ENCODE measurements at regions of chr13 and their contacts with region 1.

Region 1: GRCh38 chr13:111066544-111066943 is 48.6 kb upstream of the ARHGEF7 start:
- DNase-seq: no peak
- H3K4me3 ChIP-seq: no peak overlapping the region
- H3K27ac ChIP-seq: no peak overlapping the region
- H3K4me1 ChIP-seq: peaks cover 7% of the 10 kb centered on the region
- H3K27me3 ChIP-seq: peaks cover 13 to 23% of the 10 kb centered on the region in 2 experiments
- CTCF ChIP-seq: no peak
- POLR2A ChIP-seq: no peak

Region 2: DNA sequence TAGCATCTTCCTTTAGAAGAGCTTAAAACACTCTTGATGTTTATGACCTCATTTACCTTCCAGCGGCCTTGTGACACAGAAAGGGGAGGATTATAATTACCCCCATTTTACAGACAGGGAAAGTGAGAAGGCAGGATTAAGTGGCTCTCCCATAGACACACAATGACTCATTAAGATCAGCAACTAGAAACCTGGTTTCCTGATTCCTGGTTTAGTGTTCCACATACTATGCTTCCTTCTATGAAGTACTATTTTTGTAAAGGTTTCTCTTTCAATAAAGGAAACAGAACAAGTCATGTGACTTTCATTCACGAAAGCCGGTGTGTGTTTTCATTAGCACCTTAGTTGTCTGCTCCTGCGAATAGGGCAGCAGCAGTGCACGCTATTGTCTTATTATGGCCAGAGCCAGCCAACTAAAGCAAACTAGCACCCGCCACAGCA is 1288.4 kb before region 1 on chr13:
- CTCF ChIA-PET with region 1: no interaction called
- POLR2A ChIA-PET with region 1: no interaction called
- dilution Hi-C with region 1: no loop called
- intact Hi-C with region 1: no loop called
- DNase-seq: peak; percentile 35
- H3K4me3 ChIP-seq: no peak overlapping the region
- H3K27ac ChIP-seq: no peak overlapping the region
- H3K4me1 ChIP-seq: peaks cover 6% of the 10 kb centered on the region
- H3K27me3 ChIP-seq: no peaks in the 10 kb centered on the region
- CTCF ChIP-seq: no peak
- POLR2A ChIP-seq: no peak

Region 3: GRCh38 chr13:111049802-111050538 is 16.6 kb before region 1 on chr13:
- CTCF ChIA-PET with region 1: interaction called, 12 read pairs
- POLR2A ChIA-PET with region 1: no interaction called
- dilution Hi-C with region 1: no loop called
- intact Hi-C with region 1: no loop called
- DNase-seq: peak; percentile 24
- H3K4me3 ChIP-seq: no peak overlapping the region
- H3K27ac ChIP-seq: no peak overlapping the region
- H3K4me1 ChIP-seq: no peaks in the 10 kb centered on the region
- H3K27me3 ChIP-seq: peaks cover 0 to 1% of the 10 kb centered on the region in 2 experiments
- CTCF ChIP-seq: peak in 1 of 2 donors; percentile 46
- POLR2A ChIP-seq: no peak

Region 4: DNA sequence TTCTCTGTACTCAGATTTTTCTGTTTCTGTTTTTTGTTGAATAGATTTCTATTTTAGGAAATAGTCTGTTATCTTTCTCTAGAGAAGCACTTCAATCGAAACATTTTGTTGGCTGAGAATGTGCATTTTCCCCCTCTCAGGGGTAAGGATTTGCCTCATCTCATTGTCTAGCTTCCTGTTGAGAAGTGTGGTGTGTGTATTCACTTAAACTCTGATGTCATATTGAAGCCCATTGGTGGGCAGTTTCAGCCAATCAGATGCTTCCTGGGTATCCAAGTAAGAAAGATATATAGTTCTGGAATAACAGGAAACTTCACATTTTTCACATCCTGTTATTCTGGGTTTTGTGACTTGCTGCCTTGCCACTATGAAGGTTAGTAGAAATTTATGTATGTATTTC is 136.2 kb after region 1 on chr13:
- CTCF ChIA-PET with region 1: interaction called, 11 read pairs
- POLR2A ChIA-PET with region 1: no interaction called
- dilution Hi-C with region 1: no loop called
- intact Hi-C with region 1: no loop called
- DNase-seq: peak; percentile 99
- H3K4me3 ChIP-seq: peak overlapping the region; percentile 65 to 97 (median 82)
- H3K27ac ChIP-seq: peak overlapping the region; percentile 100
- H3K4me1 ChIP-seq: peaks cover 28% of the 10 kb centered on the region
- H3K27me3 ChIP-seq: no peaks in the 10 kb centered on the region
- CTCF ChIP-seq: no peak
- POLR2A ChIP-seq: peak; percentile 80

Region 5: DNA sequence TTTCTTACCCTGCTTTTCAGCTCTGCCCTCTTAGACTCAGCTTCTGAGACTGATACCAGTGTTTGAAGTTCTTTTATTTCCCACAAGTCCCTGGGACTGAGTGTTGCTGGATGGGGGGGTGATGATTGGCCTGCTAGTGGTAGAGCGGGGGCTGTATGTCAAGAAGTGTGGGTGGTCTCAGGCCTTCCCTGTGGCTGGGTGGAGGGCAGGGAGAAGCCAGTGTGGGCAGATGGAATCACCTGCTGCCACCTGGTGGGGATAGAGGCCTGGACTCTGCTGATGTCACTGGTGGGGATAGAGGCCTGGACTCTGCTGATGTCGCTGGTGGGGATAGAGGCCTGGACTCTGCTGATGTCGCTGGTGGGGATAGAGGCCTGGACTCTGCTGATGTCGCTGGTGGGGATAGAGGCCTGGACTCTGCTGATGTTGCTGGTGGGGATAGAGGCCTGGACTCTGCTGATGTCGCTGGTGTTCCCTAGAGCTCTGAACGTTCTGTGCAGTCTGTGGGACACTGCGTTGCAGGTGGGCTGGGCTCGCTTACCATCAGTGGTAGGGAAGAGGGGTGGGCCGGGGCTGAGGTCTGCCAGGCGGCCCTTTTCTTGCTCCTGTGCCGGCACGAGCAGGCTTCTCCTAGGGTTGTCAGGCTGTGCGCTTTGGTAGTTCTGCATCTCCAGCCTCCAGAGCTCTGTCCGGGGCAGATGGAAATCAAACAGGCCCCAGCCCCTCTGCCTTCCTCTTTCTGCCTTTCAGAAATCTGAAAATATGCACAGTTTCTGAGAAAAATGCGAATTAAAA is 149.8 kb after region 1 on chr13:
- CTCF ChIA-PET with region 1: interaction called, 43 read pairs
- POLR2A ChIA-PET with region 1: no interaction called
- dilution Hi-C with region 1: no loop called
- intact Hi-C with region 1: no loop called
- DNase-seq: no peak
- H3K4me3 ChIP-seq: no peak overlapping the region
- H3K27ac ChIP-seq: no peak overlapping the region
- H3K4me1 ChIP-seq: peaks cover 11% of the 10 kb centered on the region
- H3K27me3 ChIP-seq: no peaks in the 10 kb centered on the region
- CTCF ChIP-seq: peak; percentile 11 to 54
- POLR2A ChIP-seq: no peak

Region 6: DNA sequence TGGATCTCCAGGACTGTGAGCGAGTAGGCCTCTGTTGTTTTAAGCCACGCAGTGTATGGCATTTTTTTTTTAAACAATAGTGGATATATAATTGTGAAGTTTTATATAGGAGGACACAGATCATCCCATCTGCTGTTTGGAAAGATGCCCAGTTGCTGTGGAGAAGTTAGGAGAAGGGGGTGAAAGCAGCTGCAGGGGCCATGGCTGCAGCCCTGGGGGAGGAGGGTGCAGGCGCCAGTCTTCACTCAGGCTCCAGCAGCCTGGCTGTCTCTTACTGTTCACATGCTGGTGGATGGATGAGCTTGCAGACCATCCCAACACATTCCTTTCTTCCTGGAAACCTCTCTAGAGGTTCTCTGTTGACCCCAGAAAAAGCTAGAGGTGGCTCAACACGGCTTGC is 496.2 kb after region 1 on chr13:
- CTCF ChIA-PET with region 1: no interaction called
- POLR2A ChIA-PET with region 1: no interaction called
- dilution Hi-C with region 1: no loop called
- intact Hi-C with region 1: no loop called
- DNase-seq: no peak
- H3K4me3 ChIP-seq: no peak overlapping the region
- H3K27ac ChIP-seq: no peak overlapping the region
- H3K4me1 ChIP-seq: no peaks in the 10 kb centered on the region
- H3K27me3 ChIP-seq: no peaks in the 10 kb centered on the region
- CTCF ChIP-seq: no peak
- POLR2A ChIP-seq: no peak

Region 7: DNA sequence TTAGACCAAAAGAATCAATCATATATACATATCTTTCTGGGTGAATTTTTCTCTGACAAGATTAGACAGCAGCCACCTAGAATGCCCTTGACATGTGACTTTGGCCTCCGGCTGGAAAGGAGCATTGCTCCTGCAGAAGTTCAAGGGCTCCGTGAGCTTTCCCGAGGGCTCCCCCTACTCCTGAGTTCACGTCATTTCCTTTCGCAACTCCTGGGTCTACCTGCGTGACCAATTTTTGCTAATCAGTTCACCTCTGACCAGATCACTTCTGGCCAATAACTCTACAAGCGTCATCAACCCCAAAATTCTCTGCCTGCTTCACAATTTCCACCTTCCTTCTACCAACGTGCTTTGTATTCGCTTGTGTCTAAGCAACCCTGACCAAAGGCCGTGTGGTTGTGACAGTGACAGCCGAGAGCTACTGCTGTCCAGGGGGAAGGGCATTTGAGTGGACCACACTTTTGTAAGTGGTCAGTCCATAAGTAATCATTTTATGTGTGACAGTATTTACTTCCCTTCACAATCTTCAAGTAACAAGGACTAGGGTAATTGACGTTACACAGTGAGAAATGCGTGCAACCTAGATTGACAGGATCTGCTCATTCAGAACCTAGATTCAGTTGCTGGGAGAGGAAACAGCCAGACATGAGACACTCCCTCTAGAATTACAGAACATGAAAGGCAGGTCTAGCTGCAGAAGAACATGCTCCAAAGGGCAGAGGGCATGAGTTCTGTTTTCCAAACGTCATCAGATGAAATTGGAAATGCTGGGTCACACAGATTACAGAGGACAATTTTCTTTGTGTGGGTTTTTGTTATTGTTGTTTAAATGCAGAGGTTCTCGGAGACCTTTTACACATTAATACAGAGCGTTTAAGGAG is 1163.7 kb after region 1 on chr13:
- CTCF ChIA-PET with region 1: no interaction called
- POLR2A ChIA-PET with region 1: no interaction called
- dilution Hi-C with region 1: no loop called
- intact Hi-C with region 1: no loop called
- DNase-seq: no peak
- H3K4me3 ChIP-seq: no peak overlapping the region
- H3K27ac ChIP-seq: no peak overlapping the region
- H3K4me1 ChIP-seq: no peaks in the 10 kb centered on the region
- H3K27me3 ChIP-seq: no peaks in the 10 kb centered on the region
- CTCF ChIP-seq: no peak
- POLR2A ChIP-seq: no peak

Region 8: GRCh38 chr13:112443995-112444860 is 1377.7 kb after region 1 on chr13:
- CTCF ChIA-PET with region 1: interaction called, 33 read pairs
- POLR2A ChIA-PET with region 1: no interaction called
- dilution Hi-C with region 1: no loop called
- intact Hi-C with region 1: loop called (anchors 5 kb)
- DNase-seq: peak; percentile 53
- H3K4me3 ChIP-seq: no peak overlapping the region
- H3K27ac ChIP-seq: no peak overlapping the region
- H3K4me1 ChIP-seq: no peaks in the 10 kb centered on the region
- H3K27me3 ChIP-seq: no peaks in the 10 kb centered on the region
- CTCF ChIP-seq: peak; percentile 85 to 94
- POLR2A ChIP-seq: no peak

Measured in endothelial cell of umbilical vein (primary cell).